Cardiac septum (tissue), 1 donor: ENCODE measurements at regions of chr2 and their contacts with region 1.

Region 1: GRCh38 chr2:168480354-168480753 is 24.3 kb downstream of the CERS6 start:
- DNase-seq: no peak

Region 2: DNA sequence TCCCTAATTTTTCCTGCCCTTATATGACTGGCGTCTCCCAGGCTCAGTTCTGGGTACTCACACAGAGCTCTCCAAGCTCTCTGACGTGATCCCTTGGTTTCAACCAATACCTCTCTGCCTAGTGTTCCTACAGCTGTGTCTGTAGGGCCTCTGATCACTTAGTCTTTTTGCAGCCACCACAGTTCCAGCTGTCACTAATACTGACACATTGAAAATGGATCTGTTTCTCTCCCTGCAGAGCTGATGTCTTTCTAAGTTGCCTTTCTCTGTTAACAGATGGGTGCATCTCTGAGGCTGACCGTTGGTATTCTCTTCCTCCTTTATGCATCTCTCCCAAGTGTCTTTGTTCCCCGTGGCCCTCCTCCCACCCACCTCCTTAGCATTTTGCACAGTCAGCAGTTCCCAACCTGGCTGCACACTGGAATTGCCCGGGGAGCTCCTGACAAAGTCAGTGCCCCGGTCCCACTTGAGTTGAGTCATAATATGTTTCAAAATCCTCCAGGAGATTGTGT is 38.3 kb after region 1 on chr2:
- intact Hi-C with region 1: loop called (anchors 1 kb)
- DNase-seq: no peak